H1 (cell line): ENCODE measurements at regions of chr7 and their contacts with region 1.

Region 1: GRCh38 chr7:134432296-134433152 is 26.4 kb downstream of the AKR1B1 start:
- DNase-seq: peak; percentile 73 to 84
- H3K4me3 ChIP-seq: peak overlapping the region; percentile 38 to 68 (median 58); a peak in 7 of 8 replicates
- H3K27ac ChIP-seq: no peak overlapping the region
- H3K4me1 ChIP-seq: peaks cover 0 to 2% (median under 1%) of the 10 kb centered on the region in 4 experiments; a peak in 1 of 7 replicates
- H3K27me3 ChIP-seq: no peaks in the 10 kb centered on the region; a peak in 2 of 7 replicates
- CTCF ChIP-seq: peak; percentile 55 to 89 (median 86)
- EP300 ChIP-seq: no peak
- POLR2A ChIP-seq: no peak; a peak in 1 of 3 replicates
- RAD21 ChIP-seq: peak; percentile 94 to 95

Region 2: DNA sequence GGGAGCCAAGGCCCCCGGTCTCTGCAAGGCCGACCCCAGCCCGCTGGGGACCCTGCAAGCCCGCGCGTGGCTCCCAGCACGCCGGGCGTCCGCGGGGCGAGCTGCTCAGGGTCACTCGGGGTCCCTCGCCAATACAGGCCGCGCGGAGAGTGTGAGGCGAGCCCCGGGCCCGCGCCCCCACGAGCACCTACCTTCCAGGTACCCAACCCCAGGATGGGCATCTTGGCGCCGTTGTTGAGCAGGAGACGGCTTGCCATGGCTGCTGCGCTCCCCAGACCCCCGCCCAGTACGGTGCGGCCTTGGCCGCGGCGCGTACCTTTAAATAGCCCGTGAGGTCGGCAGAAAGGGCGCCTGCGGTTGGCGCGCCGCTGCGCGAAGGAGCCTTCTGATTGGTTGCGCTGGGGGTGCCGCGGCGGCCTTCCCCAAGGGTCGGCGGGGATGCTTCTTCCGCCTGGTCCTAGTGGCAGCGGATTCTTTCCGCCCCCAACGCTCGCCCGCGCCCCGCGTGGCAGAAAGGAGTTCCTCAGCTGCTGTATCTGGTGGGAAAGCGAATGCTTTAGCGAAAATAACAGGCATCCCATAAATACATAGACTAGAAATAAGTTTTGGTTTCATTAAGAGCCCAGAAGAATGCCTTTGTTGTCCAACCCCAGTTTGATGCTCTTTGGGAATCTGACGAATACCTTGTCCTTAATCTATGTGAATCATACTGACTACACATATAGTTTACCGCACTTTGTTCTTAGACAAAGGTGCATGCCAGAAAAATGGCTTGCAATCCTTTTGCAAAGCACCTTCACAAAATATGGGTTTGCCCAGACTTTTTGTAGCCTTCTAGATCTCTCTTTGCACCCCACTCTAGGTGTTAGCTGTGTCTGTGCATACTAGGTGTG is 26.5 kb after region 1 on chr7 and contains the start of gene AKR1B1:
- CTCF ChIA-PET with region 1: interaction called, 12 read pairs
- POLR2A ChIA-PET with region 1: interaction called, 5 read pairs
- DNase-seq: peak; percentile 74 to 93
- H3K4me3 ChIP-seq: peak within 1 kb of the TSS; percentile 83 to 92 (median 87)
- H3K27ac ChIP-seq: no peak within 1 kb of the TSS; the same call in 1 of the 2 replicates
- H3K4me1 ChIP-seq: peaks cover 0 to 4% (median 1%) of the 10 kb centered on the region in 4 experiments; a peak in 4 of 7 replicates
- H3K27me3 ChIP-seq: peaks cover 0 to 2% (median 0%) of the 10 kb centered on the region in 4 experiments; a peak in 2 of 7 replicates
- CTCF ChIP-seq: peak; percentile 44 to 55 (median 48)
- EP300 ChIP-seq: 0 out of 3 replicates have a peak, but pooled peaks of 1 of the 2 experiments have one; percentile 7
- POLR2A ChIP-seq: peak; percentile 60 to 89
- RAD21 ChIP-seq: no peak; a peak in 1 of 4 replicates
- total RNA-seq, gene AKR1B1: 189 and 195 TPM in 2 replicates

Region 3: DNA sequence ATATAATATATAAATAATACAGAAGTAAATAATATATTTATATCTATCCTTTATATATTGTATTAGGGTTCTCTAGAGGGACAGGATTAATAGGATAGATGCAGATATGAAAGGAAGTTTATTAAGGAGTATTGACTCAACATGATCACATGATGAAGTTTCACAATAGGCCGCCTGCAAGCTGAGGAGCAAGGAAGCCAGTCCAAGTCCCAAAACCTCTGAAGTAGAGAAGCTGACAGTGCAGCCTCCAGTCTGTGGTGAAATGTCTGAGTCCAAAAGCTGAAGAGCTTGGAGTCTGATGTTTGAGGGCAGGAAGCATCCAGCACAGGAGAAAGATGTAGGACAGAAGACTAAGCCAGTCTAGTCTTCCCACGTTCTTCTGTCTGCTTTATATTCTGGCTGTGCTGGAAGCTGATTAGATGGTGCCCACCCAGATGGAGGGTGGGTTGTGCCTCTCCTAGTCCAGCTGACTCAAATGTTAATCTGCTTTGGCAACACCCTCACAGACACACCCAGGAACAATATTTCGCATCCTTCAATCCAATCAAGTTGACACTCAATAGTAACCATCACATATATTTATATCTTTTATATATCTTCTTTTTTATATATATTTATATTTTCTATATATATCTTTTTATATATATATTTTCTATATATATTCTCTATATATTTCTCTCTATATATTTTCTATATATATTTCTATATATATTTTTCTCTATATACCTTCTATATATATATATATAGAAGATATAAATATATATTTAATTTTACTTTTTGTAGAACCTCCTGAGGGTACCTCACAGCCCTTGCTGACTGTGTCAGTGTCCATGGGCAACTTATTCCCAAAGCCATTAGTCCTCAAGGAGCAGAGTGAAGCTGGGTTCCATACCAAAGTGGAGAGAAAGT is 70.2 kb after region 1 on chr7:
- CTCF ChIA-PET with region 1: interaction called, 12 read pairs
- POLR2A ChIA-PET with region 1: no interaction called
- DNase-seq: no peak
- H3K4me3 ChIP-seq: no peak overlapping the region
- H3K27ac ChIP-seq: no peak overlapping the region
- H3K4me1 ChIP-seq: no peaks in the 10 kb centered on the region
- H3K27me3 ChIP-seq: no peaks in the 10 kb centered on the region
- CTCF ChIP-seq: no peak
- EP300 ChIP-seq: no peak
- POLR2A ChIP-seq: no peak
- RAD21 ChIP-seq: no peak

Region 4: DNA sequence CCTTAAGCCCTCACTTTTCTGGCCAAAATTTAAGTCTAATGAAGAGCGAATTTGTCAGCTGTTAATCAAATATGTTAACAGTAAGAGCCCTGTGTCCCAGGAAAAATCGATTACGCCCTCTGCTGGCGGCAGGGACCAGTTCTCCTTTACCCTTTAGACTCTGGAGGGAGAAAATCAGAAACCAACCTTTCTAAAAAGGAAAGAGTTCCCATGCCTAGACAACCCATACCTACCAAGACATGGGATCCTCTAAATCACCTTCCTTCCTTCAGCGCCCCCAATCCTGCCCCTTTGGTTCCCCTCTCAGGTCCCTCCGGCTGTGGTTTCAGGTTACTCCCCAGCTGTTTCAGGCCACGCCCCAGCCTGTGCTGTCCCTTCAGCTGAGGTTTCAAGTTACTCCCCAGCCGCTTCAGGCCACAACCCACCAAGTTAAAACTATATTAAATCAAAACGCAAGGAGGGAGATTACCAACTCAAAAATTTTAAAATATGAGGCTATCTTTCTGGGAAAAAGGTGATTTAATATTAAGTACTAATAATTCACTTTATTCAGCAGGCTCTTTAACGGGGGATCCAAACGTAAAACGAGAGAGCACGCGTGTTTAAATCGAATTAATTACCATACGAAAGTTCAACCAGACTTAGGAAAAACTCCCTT is 115.0 kb after region 1 on chr7:
- CTCF ChIA-PET with region 1: interaction called, 40 read pairs
- POLR2A ChIA-PET with region 1: no interaction called
- DNase-seq: peak; percentile 49 to 80
- H3K4me3 ChIP-seq: peak overlapping the region; percentile 22 to 58 (median 48)
- H3K27ac ChIP-seq: peak overlapping the region; percentile 36; the same call in 1 of the 2 replicates
- H3K4me1 ChIP-seq: peaks cover 8 to 14% (median 9%) of the 10 kb centered on the region in 4 experiments
- H3K27me3 ChIP-seq: no peaks in the 10 kb centered on the region; a peak in 1 of 7 replicates
- CTCF ChIP-seq: peak; percentile 45 to 76 (median 49); a peak in 3 of 4 replicates
- EP300 ChIP-seq: no peak
- POLR2A ChIP-seq: no peak
- RAD21 ChIP-seq: peak; percentile 30 to 37; a peak in 2 of 4 replicates

Region 5: DNA sequence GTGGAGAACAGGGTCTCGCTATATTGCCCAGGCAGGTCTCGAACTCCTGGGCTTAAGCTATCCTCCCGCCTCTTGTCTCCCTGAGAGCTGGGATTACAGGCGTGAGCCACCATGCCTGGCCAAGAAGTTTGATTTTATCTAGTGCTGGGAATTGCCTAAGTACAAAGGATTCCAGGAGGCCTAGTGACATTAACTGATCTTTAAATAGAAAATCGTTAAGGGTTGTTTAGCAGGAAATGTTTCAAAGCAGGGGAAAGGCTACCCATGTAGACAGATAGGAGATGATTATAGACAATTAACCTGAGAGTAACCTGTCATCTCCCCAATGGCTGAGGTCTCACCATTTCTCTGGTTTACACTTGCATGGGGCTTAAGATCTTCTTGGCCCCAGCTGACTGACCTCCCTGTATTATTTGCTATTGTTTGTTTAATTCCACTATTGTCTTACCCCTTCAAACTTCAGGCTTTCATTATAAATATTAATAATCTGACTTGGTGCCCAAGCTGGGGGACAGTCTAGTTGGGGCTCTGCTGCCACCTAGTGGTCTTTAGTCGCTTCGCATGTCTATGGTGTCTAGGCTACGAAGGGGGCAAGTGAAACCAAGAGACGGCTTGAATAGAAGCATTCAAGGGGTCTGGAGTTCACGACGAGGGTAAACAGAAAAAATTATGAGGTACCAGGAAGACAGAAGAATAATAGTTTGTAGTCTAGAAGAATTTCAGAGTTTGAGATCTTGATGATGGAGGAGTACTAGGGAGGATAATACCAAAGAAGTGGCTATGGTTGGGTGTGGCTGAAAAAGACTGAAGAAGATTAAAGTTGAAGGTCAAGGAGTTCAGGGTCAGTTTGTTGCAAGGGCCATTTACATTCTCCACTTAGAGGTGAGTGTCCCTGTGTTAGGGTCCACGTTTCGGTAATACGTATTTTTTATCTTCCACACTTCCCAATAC is 173.7 kb after region 1 on chr7:
- CTCF ChIA-PET with region 1: interaction called, 42 read pairs
- POLR2A ChIA-PET with region 1: no interaction called
- DNase-seq: peak in 1 of 2 experiments; percentile 68
- H3K4me3 ChIP-seq: no peak overlapping the region
- H3K27ac ChIP-seq: no peak overlapping the region
- H3K4me1 ChIP-seq: no peaks in the 10 kb centered on the region
- H3K27me3 ChIP-seq: peaks cover 0 to 3% (median under 1%) of the 10 kb centered on the region in 4 experiments; a peak in 3 of 7 replicates
- CTCF ChIP-seq: peak; percentile 69 to 79 (median 70)
- EP300 ChIP-seq: no peak
- POLR2A ChIP-seq: no peak
- RAD21 ChIP-seq: peak; percentile 84 to 87